Activated CD8-positive, alpha-beta memory T cell treated with anti-CD3 and anti-CD28 coated beads, Interleukin-2, amount 10 ng/mL, durations not matched to agents 7 days and 5 days (primary cell): ENCODE measurements at regions of chr3 and their contacts with region 1.

Region 1: GRCh38 chr3:192816351-192816750 is 89.0 kb upstream of the FGF12 start:
- DNase-seq: no peak
- ATAC-seq: no peak
- H3K4me3 Mint-ChIP-seq: no peak overlapping the region
- H3K27ac Mint-ChIP-seq: no peak overlapping the region
- H3K4me1 Mint-ChIP-seq: peaks cover 25% of the 10 kb centered on the region
- H3K27me3 Mint-ChIP-seq: peaks cover 17% of the 10 kb centered on the region

Region 2: DNA sequence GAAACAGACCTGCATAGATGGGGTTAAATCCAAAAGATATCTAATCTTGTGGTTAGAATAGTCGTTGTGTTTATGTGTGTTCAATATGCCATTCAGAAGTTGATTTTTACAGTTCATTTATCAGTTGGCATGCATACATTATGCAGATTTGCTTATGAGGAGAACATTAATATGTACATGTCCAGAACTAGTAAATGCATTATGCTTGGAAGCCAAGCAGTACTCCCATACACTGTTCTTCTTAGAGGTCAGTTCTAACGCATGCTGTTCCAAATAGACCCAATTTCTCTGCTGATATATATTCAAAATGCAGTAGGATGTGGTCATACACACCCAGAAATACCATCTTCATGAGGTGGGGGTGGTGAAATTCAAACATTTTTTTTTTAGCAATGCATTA is 90.0 kb before region 1 on chr3:
- CTCF ChIA-PET with region 1: no interaction called
- DNase-seq: no peak
- ATAC-seq: no peak
- H3K4me3 Mint-ChIP-seq: no peak overlapping the region
- H3K27ac Mint-ChIP-seq: no peak overlapping the region
- H3K4me1 Mint-ChIP-seq: no peaks in the 10 kb centered on the region
- H3K27me3 Mint-ChIP-seq: peaks cover 12% of the 10 kb centered on the region

Region 3: DNA sequence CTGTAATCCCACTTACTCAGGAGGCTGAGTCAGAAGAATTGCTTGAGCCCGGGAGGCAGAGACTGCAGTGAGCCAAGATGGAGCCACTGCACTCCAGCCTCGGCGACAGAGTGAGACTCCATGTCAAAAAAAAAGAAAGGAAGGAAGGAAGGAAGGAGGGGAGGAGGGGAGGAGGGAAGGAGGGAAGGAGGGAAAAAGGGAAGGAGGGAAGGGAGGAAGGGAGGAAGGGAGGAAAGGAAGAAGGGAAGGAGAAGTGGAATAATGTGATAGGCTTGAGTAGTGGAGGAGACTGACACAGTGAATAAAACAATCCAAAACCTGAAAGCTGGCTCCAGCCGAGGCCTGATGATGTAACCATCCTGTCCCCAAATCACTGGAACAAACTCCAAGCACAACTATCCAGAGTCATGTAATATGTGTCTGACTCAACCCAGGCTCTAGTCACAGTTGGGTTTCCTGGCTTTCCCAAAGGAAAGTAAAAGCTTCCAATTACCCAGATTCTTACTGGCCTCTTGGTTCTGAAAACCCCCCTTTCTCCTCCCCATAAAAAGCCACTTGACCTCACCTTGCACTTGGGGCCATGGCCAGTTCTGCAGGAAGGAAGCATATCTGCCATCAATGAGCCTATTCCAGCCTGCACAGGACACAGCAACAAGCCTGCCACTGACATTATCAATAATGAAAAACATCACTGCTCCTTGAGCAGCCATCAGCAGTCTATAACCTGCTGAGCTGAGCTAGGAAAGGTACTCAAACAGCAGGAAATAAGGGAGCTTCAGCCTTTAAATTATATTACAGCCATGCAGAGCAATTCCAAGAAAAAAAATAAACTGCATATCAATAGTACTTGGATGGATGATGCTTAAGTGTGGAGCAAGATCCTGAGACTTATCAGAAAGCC is 53.0 kb after region 1 on chr3:
- CTCF ChIA-PET with region 1: no interaction called
- DNase-seq: no peak
- ATAC-seq: no peak
- H3K4me3 Mint-ChIP-seq: no peak overlapping the region
- H3K27ac Mint-ChIP-seq: no peak overlapping the region
- H3K4me1 Mint-ChIP-seq: no peaks in the 10 kb centered on the region
- H3K27me3 Mint-ChIP-seq: peaks cover 11% of the 10 kb centered on the region

Region 4: DNA sequence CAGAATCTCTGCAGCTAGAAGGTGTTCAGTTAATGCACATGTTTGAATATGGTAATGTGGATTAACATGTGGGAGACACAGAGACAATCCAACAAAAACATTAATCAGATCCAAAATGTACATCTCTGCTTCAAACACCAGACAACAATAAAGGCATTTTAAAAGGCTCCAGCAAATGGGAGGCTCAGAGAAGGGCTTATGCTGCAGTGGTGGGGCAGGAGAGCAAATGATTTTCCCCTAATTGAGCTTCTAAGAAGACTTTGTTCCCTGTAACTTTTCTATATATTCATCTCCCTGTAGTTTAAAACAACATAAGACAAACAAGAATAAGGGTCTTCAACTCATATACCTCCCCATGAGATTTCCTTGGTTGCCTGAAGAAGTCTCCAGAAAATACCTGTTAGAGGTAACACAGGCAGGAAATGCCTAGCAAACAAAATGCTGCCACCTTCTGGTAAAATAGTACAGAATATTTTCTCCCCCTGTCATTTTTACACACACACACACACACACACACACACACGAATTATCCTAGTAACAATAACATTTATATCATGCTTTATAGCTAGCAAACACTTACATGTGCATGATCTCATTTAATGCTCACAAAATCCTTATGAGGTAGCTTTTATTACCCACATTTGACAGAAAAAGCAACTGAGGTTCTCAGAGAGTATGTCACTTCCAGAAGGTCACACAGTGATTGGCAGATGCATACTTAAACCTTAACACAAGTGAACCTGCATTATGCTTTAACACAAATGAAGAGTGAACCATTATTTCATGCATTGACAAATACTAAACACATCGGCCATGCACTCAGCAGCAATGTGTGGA is 224.7 kb after region 1 on chr3:
- CTCF ChIA-PET with region 1: interaction called, 34 read pairs
- DNase-seq: no peak
- ATAC-seq: no peak
- H3K4me3 Mint-ChIP-seq: no peak overlapping the region
- H3K27ac Mint-ChIP-seq: no peak overlapping the region
- H3K4me1 Mint-ChIP-seq: no peaks in the 10 kb centered on the region
- H3K27me3 Mint-ChIP-seq: no peaks in the 10 kb centered on the region